AG04449 (cell line): ENCODE measurements at regions of chr4 and their contacts with region 1.

Region 1: DNA sequence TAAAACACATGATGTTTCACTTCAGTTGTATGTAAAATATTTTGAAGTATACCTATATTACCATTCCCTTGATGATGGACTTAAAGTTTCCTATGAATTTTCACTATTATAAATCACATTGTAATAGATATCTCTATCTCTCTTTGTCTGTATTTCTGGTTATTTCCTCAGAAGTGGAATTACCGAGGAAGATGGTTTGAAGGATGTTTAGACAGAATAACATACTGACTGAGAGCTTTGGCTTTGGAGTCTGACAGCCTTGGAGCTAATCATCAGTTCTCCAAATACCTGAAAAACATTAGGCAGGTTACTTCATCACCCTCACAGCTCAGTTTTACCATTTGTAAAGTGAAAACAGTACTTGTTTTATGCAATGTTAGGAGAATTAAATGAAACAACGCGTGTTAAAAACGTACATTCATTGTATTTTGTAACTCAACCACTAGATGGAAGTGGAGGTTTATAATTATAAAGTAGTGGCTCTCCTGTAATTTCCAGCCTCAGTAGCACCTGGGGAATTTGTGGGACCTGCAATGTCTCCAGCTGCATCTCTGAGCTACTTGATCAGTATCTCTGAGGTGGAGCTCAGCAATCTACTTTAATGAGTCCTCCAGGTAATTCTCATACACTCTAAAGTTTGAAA is 14.3 kb downstream of the JCHAIN start:
- DNase-seq: no peak
- H3K4me3 ChIP-seq: no peak overlapping the region
- CTCF ChIP-seq: peak; percentile 14

Region 2: DNA sequence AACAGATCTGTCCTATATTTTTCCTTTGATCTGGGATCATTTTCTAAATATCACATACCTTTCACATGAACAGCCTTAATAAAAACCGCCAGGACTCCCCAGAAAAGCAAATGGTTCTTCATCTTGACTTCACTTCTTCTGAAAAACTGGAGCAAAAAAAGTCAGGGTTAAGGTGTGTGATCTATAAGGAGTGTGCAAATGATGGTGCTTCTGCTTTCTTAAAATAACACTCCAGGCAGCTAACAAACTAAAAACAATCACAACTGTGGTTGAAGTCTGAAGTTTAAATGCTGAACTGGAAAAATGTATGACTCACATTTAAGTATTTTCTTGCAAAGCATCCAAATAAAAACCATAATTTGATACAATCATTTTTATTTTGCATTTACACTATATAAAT is 14.4 kb after region 1 on chr4 and contains the start of gene JCHAIN:
- CTCF ChIA-PET with region 1: interaction called, 34 read pairs
- POLR2A ChIA-PET with region 1: no interaction called
- DNase-seq: no peak
- H3K4me3 ChIP-seq: no peak within 1 kb of the TSS
- CTCF ChIP-seq: no peak

Region 3: DNA sequence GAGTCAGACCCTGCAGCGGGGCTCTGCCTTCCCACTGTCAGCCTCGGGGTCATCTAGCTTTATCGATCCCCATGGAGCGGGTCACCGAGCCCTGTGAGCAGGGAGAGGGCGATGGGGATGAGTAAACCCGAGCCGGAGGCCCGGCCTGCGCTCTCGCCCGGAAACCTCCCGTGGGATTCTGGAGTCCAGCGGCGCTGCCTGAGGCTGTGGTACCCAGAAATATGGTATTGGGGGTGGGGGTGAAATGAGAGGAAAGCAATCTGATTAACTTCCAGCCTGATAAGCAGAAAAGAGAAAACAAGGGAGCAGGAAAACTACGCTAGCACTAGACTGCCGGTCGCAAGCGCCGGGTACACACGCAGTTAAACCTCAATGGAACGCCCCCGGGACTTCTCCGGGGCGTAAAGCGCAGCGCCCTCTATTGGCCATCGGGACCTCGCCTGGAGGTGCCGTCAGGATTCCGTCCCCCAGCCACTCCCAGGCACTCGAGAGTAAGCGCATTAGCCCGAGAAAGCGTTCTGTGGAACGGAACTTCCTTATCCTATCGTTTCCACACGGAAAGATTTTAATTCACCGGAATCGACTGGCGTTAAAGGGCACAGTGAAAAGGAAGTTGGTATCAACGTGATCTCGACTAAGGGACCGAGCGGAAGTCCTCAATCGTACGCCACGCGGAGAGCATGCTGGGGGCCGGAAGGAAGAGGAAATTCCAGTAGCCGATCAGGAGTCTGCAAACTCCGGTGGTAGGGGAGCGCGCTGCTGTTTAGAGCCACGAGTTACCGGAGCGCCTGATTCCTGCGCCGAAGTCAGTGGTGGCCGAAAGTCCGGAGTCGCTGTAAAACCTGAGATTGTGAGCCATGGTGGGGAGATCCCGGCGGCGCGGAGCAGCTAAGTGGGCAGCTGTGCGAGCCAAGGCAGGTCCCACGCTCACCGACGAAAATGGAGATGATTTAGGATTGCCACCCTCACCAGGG is 36.1 kb after region 1 on chr4 and contains the start of gene UTP3:
- CTCF ChIA-PET with region 1: interaction called, 24 read pairs
- POLR2A ChIA-PET with region 1: no interaction called
- DNase-seq: peak; percentile 97
- H3K4me3 ChIP-seq: peak within 1 kb of the TSS; percentile 98
- CTCF ChIP-seq: peak; percentile 98

Region 4: DNA sequence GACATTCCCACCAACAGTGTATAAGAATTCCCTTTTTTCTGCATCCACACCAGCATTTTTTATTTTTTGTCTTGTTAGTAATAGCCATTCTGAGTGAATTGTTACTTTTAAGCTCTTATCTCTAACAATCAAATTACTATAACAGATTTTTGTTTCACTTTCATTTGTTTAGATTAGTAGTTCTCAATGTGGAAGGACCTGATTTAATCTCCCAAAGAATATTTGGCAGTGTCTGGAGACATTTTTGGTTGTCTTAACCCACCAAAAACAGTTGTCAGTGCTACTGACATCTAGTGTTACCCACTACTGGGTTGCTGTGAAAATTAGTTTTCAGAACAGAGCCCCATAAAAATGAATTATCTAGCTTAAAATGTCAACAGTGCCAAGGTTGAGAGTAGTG is 107.6 kb after region 1 on chr4:
- CTCF ChIA-PET with region 1: interaction called, 12 read pairs
- POLR2A ChIA-PET with region 1: no interaction called
- DNase-seq: no peak
- H3K4me3 ChIP-seq: no peak overlapping the region
- CTCF ChIP-seq: no peak

Region 5: DNA sequence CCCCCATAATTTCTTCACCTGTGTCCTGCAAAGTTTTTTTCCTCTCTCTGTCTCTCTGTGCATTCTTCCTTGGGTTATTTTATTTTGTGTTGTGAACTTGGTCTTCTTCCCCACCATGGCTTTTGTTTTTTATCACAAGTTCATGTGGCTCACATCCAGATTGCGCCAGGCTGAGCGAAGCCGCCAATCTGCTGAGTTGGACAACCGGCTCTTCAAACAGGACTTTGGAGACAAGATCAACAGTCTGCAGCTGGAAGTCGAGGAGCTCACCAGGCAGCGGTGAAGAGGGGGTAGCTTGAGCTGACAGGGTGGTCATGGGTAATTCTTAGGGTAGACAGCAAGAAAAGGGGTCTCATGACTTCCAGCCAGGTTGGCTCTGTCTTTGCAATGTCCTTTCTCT is 141.6 kb after region 1 on chr4:
- CTCF ChIA-PET with region 1: no interaction called
- POLR2A ChIA-PET with region 1: no interaction called
- DNase-seq: no peak
- H3K4me3 ChIP-seq: no peak overlapping the region
- CTCF ChIP-seq: no peak